ENCODE measurements at regions of chr11 and their contacts with region 1.

Region 1: GRCh38 chr11:14249121-14249963 is 109.6 kb downstream of the RRAS2 start:
- DNase-seq: peak; percentile 82
- H3K4me3 Mint-ChIP-seq: no peak overlapping the region
- H3K27ac Mint-ChIP-seq: no peak overlapping the region
- H3K4me1 Mint-ChIP-seq: peaks cover 15% of the 10 kb centered on the region
- H3K27me3 Mint-ChIP-seq: no peaks in the 10 kb centered on the region

Region 2: GRCh38 chr11:13486926-13487660 is 762.2 kb before region 1 on chr11:
- CTCF ChIA-PET with region 1: no interaction called
- intact Hi-C with region 1: loop called (anchors 2 kb)
- DNase-seq: peak; percentile 70
- H3K4me3 Mint-ChIP-seq: peak overlapping the region; percentile 62
- H3K27ac Mint-ChIP-seq: no peak overlapping the region
- H3K4me1 Mint-ChIP-seq: peaks cover 2% of the 10 kb centered on the region
- H3K27me3 Mint-ChIP-seq: peaks cover 5% of the 10 kb centered on the region

Region 3: DNA sequence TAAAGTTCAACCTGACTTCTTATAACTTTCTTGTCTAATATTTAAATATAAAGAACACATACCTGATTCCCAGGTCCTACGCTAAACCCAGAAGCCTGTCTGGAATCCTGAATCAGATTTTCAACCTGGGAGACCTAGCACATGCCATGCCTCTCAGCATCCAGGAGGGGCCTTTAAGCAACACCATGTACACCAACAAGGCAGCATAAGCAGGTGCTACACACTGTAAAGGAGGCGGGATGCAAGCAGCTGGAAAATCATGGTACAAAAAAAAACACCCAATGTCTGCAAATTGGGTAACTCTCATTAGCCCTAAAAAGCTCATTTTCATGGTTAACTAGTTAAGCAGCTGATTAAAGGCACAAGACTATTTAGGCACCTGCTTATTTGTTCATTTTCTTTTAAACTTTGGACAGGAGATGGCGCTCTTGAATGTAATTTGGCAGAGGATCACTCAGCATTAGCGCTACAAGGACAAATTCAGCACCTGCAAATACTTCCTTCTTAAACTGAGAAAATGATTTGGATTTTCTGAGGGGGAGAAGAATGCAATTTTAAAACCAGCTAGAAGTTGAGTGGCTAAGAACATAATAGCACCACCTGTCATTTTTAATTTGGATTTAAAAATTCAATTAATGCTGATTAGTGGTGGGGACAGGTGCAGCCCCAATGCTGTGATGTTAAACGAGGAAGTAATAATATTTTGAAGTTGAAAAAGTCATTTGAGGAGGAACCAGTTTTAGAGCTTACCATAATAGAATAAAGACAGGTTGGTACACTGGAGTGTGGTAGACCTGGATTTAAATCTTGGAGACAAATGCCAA is 476.9 kb before region 1 on chr11:
- CTCF ChIA-PET with region 1: interaction called, 12 read pairs
- intact Hi-C with region 1: loop called (anchors 1 kb)
- DNase-seq: peak; percentile 35
- H3K4me3 Mint-ChIP-seq: no peak overlapping the region
- H3K27ac Mint-ChIP-seq: no peak overlapping the region
- H3K4me1 Mint-ChIP-seq: no peaks in the 10 kb centered on the region
- H3K27me3 Mint-ChIP-seq: no peaks in the 10 kb centered on the region

Region 4: GRCh38 chr11:14308114-14308896 is 59.0 kb after region 1 on chr11:
- CTCF ChIA-PET with region 1: no interaction called
- intact Hi-C with region 1: no loop called
- DNase-seq: no peak
- H3K4me3 Mint-ChIP-seq: no peak overlapping the region
- H3K27ac Mint-ChIP-seq: no peak overlapping the region
- H3K4me1 Mint-ChIP-seq: peaks cover 19% of the 10 kb centered on the region
- H3K27me3 Mint-ChIP-seq: no peaks in the 10 kb centered on the region

Region 5: DNA sequence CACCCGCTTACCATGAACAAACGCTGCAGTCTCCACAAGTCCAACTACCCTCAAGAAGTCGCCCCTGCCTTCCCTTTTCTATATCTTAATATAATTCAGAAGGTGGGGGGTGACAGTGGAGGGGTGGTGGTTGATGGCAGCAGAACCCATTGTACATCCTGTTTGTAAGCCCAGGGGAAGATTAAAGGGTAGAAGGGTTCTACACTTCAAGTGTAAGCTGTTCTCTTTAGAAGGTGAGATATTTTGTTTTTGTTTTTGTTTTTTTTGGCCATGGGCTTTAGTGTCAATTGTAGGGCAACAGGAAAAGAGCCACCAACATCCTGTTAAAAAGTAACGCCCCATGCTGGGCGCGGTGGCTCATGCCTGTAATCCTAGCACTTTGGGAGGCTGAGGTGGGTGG is 144.5 kb after region 1 on chr11:
- CTCF ChIA-PET with region 1: no interaction called
- intact Hi-C with region 1: no loop called
- DNase-seq: no peak
- H3K4me3 Mint-ChIP-seq: no peak overlapping the region
- H3K27ac Mint-ChIP-seq: no peak overlapping the region
- H3K4me1 Mint-ChIP-seq: no peaks in the 10 kb centered on the region
- H3K27me3 Mint-ChIP-seq: no peaks in the 10 kb centered on the region